Endothelial cell of umbilical vein (primary cell): ENCODE measurements at regions of chr11 and their contacts with region 1.

Region 1: GRCh38 chr11:31233424-31233823 is 136.1 kb downstream of the DCDC1 start:
- DNase-seq: no peak
- H3K4me3 ChIP-seq: no peak overlapping the region
- H3K27ac ChIP-seq: no peak overlapping the region
- H3K4me1 ChIP-seq: no peaks in the 10 kb centered on the region
- H3K27me3 ChIP-seq: no peaks in the 10 kb centered on the region
- CTCF ChIP-seq: no peak
- POLR2A ChIP-seq: no peak

Region 2: DNA sequence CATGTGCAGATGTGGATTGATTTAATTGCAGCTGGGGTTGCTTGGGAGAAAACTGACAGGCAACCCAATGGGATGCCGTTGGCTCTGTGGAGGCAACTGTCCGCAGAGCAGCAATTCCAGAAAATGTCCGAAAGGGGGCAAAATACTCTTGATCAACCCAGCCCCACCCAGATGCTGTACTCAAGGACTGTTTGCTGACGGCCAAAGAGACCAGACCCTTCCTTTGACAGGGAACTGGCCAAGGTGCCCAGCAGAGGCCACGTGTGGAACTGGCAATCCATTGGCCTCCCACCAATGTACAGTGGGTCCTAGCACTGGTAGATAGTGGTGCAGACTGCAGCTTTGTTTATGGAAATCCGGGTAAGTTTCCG is 1186.9 kb before region 1 on chr11:
- CTCF ChIA-PET with region 1: no interaction called
- POLR2A ChIA-PET with region 1: no interaction called
- dilution Hi-C with region 1: no loop called
- intact Hi-C with region 1: no loop called
- DNase-seq: no peak
- H3K4me3 ChIP-seq: no peak overlapping the region
- H3K27ac ChIP-seq: no peak overlapping the region
- H3K4me1 ChIP-seq: no peaks in the 10 kb centered on the region
- H3K27me3 ChIP-seq: no peaks in the 10 kb centered on the region
- CTCF ChIP-seq: no peak
- POLR2A ChIP-seq: no peak

Region 3: DNA sequence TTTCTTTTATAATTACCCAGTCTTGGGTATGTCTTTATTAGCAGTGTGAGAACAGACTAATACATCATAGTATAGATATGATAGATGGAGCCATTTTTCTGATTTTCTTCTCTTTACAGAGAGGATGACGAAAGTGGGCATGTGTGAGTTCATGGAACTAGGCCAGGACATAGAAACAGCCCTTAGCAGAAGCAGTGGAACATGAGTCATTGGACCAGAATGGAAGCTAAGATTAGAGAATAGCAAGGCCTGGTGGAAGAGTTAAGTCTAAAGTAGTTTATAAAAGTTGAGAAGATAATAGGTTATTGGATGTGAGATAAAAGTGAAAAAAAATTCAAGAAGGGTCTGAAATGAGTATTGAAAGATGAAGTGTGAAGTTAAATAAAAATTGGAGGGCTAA is 550.2 kb before region 1 on chr11:
- CTCF ChIA-PET with region 1: no interaction called
- POLR2A ChIA-PET with region 1: no interaction called
- dilution Hi-C with region 1: no loop called
- intact Hi-C with region 1: no loop called
- DNase-seq: no peak
- H3K4me3 ChIP-seq: no peak overlapping the region
- H3K27ac ChIP-seq: no peak overlapping the region
- H3K4me1 ChIP-seq: no peaks in the 10 kb centered on the region
- H3K27me3 ChIP-seq: no peaks in the 10 kb centered on the region
- CTCF ChIP-seq: no peak
- POLR2A ChIP-seq: no peak

Region 4: GRCh38 chr11:31107062-31107461 is 126.4 kb before region 1 on chr11:
- CTCF ChIA-PET with region 1: no interaction called
- POLR2A ChIA-PET with region 1: no interaction called
- dilution Hi-C with region 1: no loop called
- intact Hi-C with region 1: loop called (anchors 2 kb)
- DNase-seq: peak; percentile 44
- H3K4me3 ChIP-seq: no peak overlapping the region
- H3K27ac ChIP-seq: no peak overlapping the region
- H3K4me1 ChIP-seq: no peaks in the 10 kb centered on the region
- H3K27me3 ChIP-seq: no peaks in the 10 kb centered on the region
- CTCF ChIP-seq: peak; percentile 20 to 53
- POLR2A ChIP-seq: no peak